ENCODE measurements at regions of chr1 and their contacts with region 1.

Region 1: DNA sequence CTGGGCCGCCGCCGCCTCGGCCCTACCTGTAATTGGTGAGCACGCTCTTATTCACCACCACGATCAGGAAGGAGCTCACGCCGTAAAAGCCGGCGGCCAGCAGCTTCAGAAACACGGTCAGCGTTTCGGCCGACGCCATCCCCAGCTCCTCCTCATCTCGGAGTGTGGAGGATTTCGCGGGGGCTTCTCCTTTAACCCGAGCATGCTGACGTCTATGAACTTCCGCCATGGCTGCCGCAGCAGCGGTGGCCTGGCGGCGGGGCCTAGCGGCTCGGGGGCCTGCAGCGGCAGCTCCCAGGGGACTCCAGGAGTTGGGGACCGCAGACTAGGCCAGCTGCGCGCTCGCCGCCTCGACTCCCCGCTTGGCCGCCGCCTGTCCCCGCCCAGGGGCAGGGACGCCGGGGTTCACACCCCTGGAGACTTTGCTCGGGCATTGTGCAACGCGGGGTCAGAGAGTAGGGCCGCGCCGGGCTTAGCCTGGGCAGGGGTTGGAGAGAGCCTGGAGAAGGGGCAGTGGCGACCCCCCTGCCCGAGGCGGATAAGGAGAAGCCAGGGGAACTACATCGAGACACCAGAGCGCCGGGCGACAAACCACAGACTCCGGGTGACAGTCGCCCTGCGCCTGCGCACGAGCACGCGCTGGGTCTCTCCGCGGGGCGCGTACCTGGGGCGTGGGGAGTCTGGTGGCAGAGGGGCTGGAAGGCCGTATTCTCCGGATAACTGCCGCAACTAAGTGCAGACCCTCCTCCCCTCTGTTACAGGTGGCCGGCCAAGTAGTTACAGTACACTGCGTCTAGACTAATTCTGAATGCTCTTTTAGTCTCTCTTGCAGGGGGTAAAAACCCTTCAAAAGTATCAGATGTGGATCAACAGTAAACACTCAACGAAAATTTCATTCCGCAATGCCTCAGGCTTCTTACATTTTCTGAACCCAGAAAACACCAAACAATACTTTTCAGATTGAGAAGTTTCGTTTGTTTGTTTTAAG is at the start of gene SLC35D1:
- DNase-seq: peak; percentile 88
- total RNA-seq, gene SLC35D1: 4.5 TPM

Region 2: DNA sequence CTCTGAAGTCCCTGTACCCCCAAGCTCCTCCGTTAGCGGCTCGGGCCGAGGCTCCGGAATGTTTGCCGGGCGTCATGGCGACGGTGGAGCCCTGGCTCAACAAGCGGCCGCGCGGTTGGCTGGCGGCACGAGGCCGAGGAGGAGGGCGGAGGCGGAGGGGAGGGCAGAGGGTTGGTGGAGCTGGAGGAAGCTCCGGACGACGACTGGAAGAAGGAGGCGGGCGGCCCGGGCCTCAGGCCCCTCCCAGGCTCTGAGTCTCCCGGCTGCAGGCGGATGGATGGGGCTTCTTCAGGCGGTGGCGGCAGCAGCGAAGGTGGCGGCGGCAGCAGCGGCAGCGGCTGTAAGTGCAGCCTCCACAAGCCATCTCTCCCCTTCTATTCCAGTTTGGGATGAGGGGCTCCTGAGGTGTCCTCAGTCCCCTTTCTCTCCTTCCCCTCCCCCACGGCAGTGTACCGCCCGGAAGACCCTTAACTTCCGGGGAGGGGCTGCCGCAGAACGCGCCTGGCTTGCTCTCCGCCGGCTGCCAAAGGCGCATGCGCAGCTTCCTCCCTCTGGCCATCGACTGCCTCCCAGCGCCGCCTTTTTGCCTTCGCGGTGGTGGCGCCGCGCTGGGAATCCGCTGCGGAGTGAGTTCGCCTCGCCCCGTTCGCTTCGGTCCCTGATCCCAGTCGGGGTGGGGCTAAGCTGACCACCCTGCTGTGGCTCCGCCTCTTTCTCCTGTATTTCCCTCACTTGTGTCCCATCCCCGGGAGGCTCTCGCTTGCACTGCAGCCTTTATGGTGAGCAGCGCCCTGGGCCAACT is 129.1 kb before region 1 on chr1 and contains the starts of genes DNAI4 and MIER1:
- intact Hi-C with region 1: loop called (anchors 2 kb)
- DNase-seq: peak; percentile 99
- total RNA-seq, gene DNAI4: 10.9 TPM
- total RNA-seq, gene MIER1: 27.8 TPM

Region 3: DNA sequence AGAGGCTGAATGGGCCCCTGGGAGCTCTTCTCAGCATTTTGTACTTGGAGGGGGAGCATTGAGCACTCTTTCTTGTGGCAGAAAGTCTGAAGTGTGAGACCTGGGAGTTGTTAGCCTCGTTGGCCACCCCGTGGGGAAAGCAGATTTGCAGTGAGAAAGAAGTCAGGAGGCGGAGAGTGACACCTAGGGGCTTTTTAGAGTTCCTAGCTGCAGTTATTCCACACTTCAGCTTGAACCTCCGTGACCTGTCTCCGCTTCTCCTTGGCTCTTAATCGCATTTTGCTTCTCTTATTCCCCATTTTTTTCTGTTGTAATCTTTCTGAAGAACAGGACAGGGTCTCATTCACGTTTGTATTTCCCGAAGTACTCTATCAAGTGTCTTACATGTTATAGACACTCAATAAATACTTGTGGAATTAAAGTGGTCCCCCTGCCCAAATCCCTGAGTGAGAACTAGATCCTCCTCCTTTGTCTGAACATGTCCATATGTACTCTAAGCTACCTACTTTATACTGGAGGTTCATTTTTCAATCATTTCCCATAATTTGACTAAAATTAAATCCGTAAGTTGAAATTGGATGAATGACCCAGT is 95.2 kb after region 1 on chr1:
- intact Hi-C with region 1: loop called (anchors 5 kb)
- DNase-seq: no peak